ENCODE measurements at regions of chr11 and their contacts with region 1.

Region 1: DNA sequence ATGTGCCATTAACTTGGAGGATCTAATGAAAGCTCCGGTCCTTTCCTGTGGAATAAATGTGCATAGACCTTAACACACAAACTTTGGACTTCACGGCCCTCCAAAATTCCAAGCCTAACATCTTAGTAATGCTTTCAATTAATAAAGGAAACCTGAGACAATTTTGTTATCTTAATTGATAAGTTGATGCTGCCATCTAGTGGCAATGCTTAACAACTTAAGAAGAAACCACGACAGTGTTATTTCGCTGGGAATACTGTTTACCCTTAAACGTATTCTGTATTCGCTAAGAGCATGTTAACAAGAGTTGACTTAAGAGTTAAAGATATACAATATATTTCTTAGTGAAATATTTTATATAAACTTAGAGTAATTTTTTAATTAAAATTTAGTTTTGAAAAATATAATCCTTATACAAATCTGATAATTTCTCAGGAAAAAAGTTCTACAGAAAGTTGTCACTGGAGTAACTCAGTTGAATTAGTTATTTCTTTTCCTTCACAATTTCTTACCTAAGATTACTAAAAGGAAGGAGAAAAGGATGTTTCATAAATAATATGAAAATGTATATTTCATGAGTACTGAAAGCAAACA is 35.0 kb upstream of the OR9G4 start:
- DNase-seq: peak in 2 of 7 donors; percentile 12 to 20
- H3K4me3 ChIP-seq: no peak overlapping the region
- H3K27ac ChIP-seq: no peak overlapping the region
- H3K4me1 ChIP-seq: no peaks in the 10 kb centered on the region
- H3K27me3 ChIP-seq: no peaks in the 10 kb centered on the region
- CTCF ChIP-seq: peak; percentile 38 to 65 (median 47)
- POLR2A ChIP-seq: no peak

Region 2: GRCh38 chr11:55942785-55943392 is 840.7 kb before region 1 on chr11:
- intact Hi-C with region 1: loop called in 1 of 2 experiments (anchors 10 kb)
- DNase-seq: no peak
- H3K4me3 ChIP-seq: no peak overlapping the region
- H3K27ac ChIP-seq: no peak overlapping the region
- H3K4me1 ChIP-seq: no peaks in the 10 kb centered on the region
- H3K27me3 ChIP-seq: no peaks in the 10 kb centered on the region
- CTCF ChIP-seq: peak; percentile 21 to 53 (median 34)
- POLR2A ChIP-seq: no peak

Region 3: DNA sequence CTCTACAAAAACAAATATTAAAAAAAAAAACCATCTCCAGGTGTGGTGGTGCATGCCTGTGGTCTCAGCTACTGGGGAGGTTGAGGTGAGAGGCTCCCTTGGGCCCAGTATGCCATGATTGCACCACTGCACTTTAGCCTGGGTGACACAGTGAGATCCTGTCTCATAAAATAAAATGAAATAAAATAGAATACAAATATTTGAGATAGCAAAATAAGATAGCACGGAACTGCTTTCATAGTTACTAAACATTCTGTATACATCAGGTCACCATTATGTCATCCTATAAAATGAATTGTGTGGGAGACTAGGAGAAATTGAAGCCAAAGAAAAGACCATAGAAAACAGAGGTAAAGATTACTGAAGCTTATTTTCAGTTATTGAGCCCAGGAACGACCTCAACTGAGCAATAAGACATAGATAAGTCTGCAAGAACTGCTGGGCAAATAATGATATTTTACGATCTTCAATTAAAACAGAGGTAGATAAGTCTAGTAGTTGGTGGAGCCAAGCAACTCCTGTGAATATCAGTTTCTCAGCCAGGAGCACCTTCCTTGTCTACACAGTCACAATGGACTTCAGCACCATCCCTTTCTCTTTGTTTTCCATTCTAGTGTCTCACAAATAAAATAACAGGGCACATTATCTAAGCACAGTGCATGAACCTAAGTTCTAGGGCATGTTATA is 250.3 kb before region 1 on chr11:
- intact Hi-C with region 1: no loop called
- DNase-seq: no peak
- H3K4me3 ChIP-seq: no peak overlapping the region
- H3K27ac ChIP-seq: no peak overlapping the region
- H3K4me1 ChIP-seq: no peaks in the 10 kb centered on the region
- H3K27me3 ChIP-seq: no peaks in the 10 kb centered on the region
- CTCF ChIP-seq: no peak
- POLR2A ChIP-seq: no peak

Region 4: DNA sequence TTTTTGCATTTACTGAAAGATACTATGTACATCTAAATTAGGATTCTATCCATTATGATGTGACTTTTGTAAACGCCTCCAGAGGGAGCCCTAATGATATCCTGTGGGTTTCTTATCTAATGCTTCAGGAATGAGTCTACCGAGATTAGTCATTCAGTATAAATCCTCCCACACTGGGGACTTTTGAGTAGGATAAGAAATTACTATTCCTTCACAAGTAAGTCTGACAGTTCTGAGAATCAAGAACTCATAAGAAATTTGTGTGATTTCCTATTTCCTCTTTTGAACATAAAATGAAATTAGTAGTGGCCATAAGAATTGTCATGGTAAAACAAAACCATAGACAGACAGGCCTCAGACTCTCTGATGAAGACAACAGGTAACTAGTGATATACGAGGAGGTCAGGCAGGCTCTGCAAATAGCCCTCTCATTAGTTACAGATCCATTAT is 158.9 kb before region 1 on chr11:
- intact Hi-C with region 1: loop called in 1 of 2 experiments (anchors 5 kb)
- DNase-seq: peak in 3 of 7 donors; percentile 6 to 37 (median 16)
- H3K4me3 ChIP-seq: no peak overlapping the region
- H3K27ac ChIP-seq: no peak overlapping the region
- H3K4me1 ChIP-seq: no peaks in the 10 kb centered on the region
- H3K27me3 ChIP-seq: no peaks in the 10 kb centered on the region
- CTCF ChIP-seq: peak in 5 of 6 experiments; percentile 22 to 43 (median 41)
- POLR2A ChIP-seq: no peak

Region 5: GRCh38 chr11:56688554-56689100 is 94.9 kb before region 1 on chr11:
- intact Hi-C with region 1: no loop called
- DNase-seq: no peak
- H3K4me3 ChIP-seq: no peak overlapping the region
- H3K27ac ChIP-seq: no peak overlapping the region
- H3K4me1 ChIP-seq: no peaks in the 10 kb centered on the region
- H3K27me3 ChIP-seq: no peaks in the 10 kb centered on the region
- CTCF ChIP-seq: no peak
- POLR2A ChIP-seq: no peak

Region 6: DNA sequence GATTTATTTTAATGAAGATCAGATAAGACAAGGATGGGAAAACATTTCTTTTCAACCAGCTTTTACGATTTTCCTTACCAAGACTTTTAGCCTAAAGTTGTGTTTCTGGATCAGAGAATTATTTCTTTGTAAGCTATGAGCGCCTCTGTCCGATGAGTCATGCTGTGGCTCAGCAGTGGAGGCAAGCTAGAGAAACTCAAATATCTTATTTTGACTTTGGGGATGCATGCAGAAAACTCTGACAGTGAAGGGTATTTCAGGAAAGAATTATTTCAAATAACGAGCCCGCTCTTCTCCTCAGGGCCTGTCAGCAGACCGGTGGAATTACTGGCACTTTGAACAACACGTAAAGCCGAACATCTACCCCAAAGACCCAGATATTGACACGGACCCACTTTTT is 127.2 kb after region 1 on chr11:
- intact Hi-C with region 1: no loop called
- DNase-seq: no peak
- H3K4me3 ChIP-seq: no peak overlapping the region
- H3K27ac ChIP-seq: no peak overlapping the region
- H3K4me1 ChIP-seq: no peaks in the 10 kb centered on the region
- H3K27me3 ChIP-seq: no peaks in the 10 kb centered on the region
- CTCF ChIP-seq: no peak
- POLR2A ChIP-seq: no peak

Measured in adrenal gland (tissue), 19 donors.